Left colon (tissue), 2 donors: ENCODE measurements at regions of chr2 and their contacts with region 1.

Region 1: DNA sequence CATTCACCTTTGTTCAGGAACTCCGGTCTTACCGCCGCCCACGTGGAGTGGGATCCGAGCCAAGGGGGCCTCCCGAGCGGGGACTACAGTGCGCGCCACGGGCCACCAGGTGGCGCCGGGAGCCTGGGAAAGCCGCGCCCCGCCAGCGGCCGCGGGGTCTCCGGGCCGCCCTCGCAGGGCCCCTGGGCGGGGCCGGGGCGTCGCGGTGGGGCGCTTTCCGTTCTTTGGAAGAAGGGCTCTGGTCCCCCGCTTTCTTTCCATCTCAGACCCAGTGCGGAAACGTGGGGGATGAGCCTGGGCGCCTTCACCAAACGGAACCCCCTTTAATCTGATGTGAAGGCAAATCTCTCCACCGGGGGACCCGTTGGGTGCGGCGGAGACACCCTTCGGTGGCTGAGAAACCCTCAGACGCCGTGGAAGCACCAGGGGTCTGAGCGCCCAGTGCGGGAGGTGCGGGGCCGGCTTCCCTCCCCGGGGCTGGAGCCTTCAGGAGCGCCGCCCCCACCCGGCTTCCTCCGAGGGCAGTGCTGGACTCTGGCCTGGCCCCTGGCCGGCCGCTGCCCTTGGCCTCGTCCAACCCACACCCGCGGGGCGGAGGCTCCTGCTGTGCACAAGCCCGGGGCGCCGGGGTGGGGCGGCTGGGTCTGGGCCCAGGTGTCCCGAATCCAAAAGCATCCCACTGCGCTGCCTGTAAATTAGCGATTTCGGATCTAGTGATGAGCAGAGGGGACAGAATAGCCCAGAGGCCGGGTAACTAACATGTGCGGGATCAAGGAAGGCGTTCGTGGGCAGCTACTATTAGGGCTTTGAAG is 44.6 kb downstream of the GORASP2 start:
- DNase-seq: peak; percentile 84 to 93
- ATAC-seq: peak; percentile 89

Region 2: GRCh38 chr2:170815746-170816503 is 157.8 kb before region 1 on chr2:
- intact Hi-C with region 1: no loop called
- DNase-seq: peak in 1 of 2 donors; percentile 73
- ATAC-seq: peak; percentile 72

Region 3: DNA sequence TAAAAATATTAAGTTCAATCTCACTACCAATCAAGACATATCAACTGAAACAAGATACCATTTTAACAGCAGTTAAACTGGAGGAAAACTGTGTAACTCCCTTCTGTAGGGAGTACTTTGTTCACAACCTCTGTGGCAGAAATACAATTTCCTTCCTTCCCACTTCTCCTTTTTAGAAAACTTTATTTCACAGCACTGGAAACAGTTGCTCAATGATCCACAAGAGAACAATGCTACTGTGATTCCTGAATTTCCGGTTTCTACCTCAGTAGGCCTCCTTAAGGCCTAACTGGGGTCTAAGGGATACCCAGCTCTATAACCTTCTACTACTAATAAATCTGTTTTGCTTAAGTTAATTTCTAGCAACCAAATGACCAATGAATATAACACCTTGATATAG is 172.9 kb after region 1 on chr2:
- intact Hi-C with region 1: loop called in 1 of 2 experiments (anchors 5 kb)
- DNase-seq: no peak
- ATAC-seq: peak; percentile 55

Region 4: GRCh38 chr2:171416009-171416926 is 442.6 kb after region 1 on chr2:
- intact Hi-C with region 1: loop called in 1 of 2 experiments (anchors 5 kb)
- DNase-seq: peak; percentile 93 to 96
- ATAC-seq: peak; percentile 100